ENCODE measurements at regions of chr12 and their contacts with region 1.

Region 1: DNA sequence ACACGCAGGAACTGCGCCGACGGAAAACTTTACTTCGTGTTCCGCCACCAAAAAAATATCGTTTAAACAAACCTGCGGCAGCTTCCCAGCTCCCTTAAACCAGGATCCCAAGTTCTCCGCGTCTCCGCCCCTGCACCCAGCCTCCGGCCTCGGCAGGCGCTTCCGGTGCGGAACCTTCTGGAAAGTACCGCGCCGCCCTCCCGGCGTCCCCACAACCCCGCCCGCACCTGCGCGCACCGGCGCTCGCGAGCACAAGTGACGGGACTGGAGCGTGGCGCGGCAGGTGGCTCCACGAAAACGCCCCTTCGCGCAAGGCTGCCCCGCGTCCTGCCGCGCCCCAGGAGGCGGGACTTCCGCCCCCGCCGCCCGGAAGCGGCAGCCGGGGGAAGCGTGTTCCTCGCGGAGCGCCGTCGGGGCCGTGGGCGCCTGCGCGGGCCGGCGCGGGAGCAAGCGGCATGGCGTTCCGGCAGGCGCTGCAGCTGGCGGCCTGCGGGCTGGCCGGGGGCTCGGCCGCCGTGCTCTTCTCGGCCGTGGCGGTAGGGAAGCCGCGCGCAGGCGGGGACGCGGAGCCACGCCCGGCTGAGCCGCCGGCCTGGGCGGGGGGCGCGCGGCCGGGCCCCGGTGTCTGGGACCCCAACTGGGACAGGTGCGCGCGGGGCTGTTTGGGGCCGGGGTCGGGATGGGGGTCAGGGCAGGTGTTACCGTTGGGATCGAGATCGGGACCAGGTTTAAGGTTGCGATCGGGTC is at the start of gene PGAM5:
- DNase-seq: peak; percentile 96
- ATAC-seq: peak; percentile 93
- H3K4me3 Mint-ChIP-seq: peak within 1 kb of the TSS; percentile 92
- H3K27ac Mint-ChIP-seq: peak within 1 kb of the TSS; percentile 95
- H3K4me1 Mint-ChIP-seq: peaks cover 33% of the 10 kb centered on the region
- H3K27me3 Mint-ChIP-seq: no peaks in the 10 kb centered on the region
- CTCF ChIP-seq: no peak
- total RNA-seq, gene PGAM5: 44.0 and 48.7 TPM in 2 replicates

Region 2: GRCh38 chr12:132700212-132700822 is 10.3 kb before region 1 on chr12:
- CTCF ChIA-PET with region 1: no interaction called
- POLR2A ChIA-PET with region 1: interaction called, 6 read pairs
- intact Hi-C with region 1: loop called (anchors 1 kb)
- DNase-seq: no peak
- ATAC-seq: peak; percentile 52
- H3K4me3 Mint-ChIP-seq: peak overlapping the region; percentile 49
- H3K27ac Mint-ChIP-seq: peak overlapping the region; percentile 27
- H3K4me1 Mint-ChIP-seq: peaks cover 22% of the 10 kb centered on the region
- H3K27me3 Mint-ChIP-seq: no peaks in the 10 kb centered on the region
- CTCF ChIP-seq: no peak

Measured in activated B cell treated with CpG ODN at 0.5 μM for 24 hours (primary cell).